Heart left ventricle (tissue), 16 donors: ENCODE measurements at regions of chr11 and their contacts with region 1.

Region 1: GRCh38 chr11:76152086-76152681 is 54.1 kb downstream of the WNT11 start:
- DNase-seq: peak; percentile 86 to 95 (median 89)
- ATAC-seq: peak; percentile 80 to 92 (median 91)
- H3K4me3 ChIP-seq: peak overlapping the region in 11 of 12 donors; percentile 19 to 66 (median 48)
- H3K27ac ChIP-seq: peak overlapping the region in 4 of 12 donors; percentile 4 to 34 (median 20)
- H3K4me1 ChIP-seq: peaks cover 0 to 17% (median 12%) of the 10 kb centered on the region in 12 donors
- H3K27me3 ChIP-seq: no peaks in the 10 kb centered on the region
- CTCF ChIP-seq: peak; percentile 93 to 97 (median 96)
- POLR2A ChIP-seq: no peak

Region 2: GRCh38 chr11:75802913-75803820 is 349.0 kb before region 1 on chr11:
- intact Hi-C with region 1: loop called in 7 of 10 experiments (anchors 5 to 10 kb)
- DNase-seq: peak in 4 of 5 donors; percentile 61 to 78 (median 76)
- ATAC-seq: peak; percentile 77 to 90 (median 84)
- H3K4me3 ChIP-seq: no peak overlapping the region
- H3K27ac ChIP-seq: no peak overlapping the region
- H3K4me1 ChIP-seq: peaks cover 0 to 30% (median 0%) of the 10 kb centered on the region in 12 donors
- H3K27me3 ChIP-seq: no peaks in the 10 kb centered on the region
- CTCF ChIP-seq: peak; percentile 87 to 97 (median 92)
- POLR2A ChIP-seq: no peak

Region 3: GRCh38 chr11:75814686-75815344 is 337.4 kb before region 1 on chr11 and contains the start of gene UVRAG:
- intact Hi-C with region 1: loop called in 2 of 10 experiments (anchors 5 to 10 kb)
- DNase-seq: peak; percentile 98 to 99 (median 98)
- ATAC-seq: peak; percentile 97 to 98 (median 98)
- H3K4me3 ChIP-seq: peak within 1 kb of the TSS; percentile 72 to 100 (median 94)
- H3K27ac ChIP-seq: peak within 1 kb of the TSS; percentile 84 to 96 (median 94)
- H3K4me1 ChIP-seq: peaks cover 0 to 60% (median 22%) of the 10 kb centered on the region in 12 donors
- H3K27me3 ChIP-seq: no peaks in the 10 kb centered on the region
- CTCF ChIP-seq: peak in 3 of 12 donors; percentile 12 to 39 (median 37)
- POLR2A ChIP-seq: peak; percentile 18 to 95
- total RNA-seq, gene UVRAG: 12.7 to 22.6 (median 15.2) TPM

Region 4: GRCh38 chr11:75896843-75897419 is 255.3 kb before region 1 on chr11:
- intact Hi-C with region 1: loop called (anchors 1 to 5 kb)
- DNase-seq: no peak
- ATAC-seq: peak in 2 of 4 donors; percentile 33 to 43
- H3K4me3 ChIP-seq: no peak overlapping the region
- H3K27ac ChIP-seq: no peak overlapping the region
- H3K4me1 ChIP-seq: peaks cover 0 to 25% (median 5%) of the 10 kb centered on the region in 12 donors
- H3K27me3 ChIP-seq: no peaks in the 10 kb centered on the region
- CTCF ChIP-seq: peak; percentile 56 to 83 (median 74)
- POLR2A ChIP-seq: no peak

Region 5: DNA sequence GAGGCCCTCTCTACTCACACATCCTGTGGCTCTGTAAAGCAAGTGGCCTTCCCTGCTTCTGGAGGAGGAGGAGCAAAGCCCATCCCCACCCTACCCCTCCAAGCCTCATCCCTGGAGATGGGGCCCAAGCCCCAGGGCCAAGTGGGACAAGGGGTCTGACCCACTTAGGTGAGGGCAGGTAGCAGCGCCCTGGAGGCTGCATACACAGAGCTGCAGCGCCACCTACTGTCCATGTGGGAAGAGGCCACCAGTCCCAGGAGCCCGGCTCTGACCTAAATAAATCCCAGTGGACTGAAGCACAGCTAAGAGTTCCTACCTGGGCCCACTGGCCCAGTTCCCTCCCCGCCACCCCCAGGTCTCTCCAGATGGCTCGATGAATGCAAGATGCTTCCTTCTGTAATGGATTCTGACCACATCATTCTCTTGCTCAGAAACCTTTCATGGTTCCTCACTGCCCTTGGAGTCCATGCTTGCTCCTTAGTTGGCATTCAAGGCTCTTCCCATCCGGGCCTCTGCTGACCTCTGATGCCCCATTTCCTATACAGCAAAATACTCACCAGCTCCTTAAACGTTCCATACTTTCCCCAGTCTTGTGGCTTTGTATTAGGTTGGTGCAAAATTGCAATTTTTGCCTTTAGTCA is 166.7 kb after region 1 on chr11:
- intact Hi-C with region 1: loop called in 5 of 10 experiments (anchors 2 to 5 kb)
- DNase-seq: peak; percentile 77 to 89 (median 78)
- ATAC-seq: peak; percentile 83 to 93 (median 90)
- H3K4me3 ChIP-seq: no peak overlapping the region
- H3K27ac ChIP-seq: no peak overlapping the region
- H3K4me1 ChIP-seq: peaks cover 0 to 13% (median 2%) of the 10 kb centered on the region in 12 donors
- H3K27me3 ChIP-seq: peaks cover 0 to 24% (median 5%) of the 10 kb centered on the region in 9 donors
- CTCF ChIP-seq: peak; percentile 83 to 95 (median 92)
- POLR2A ChIP-seq: no peak